ENCODE measurements at regions of chr3 and their contacts with region 1.

Region 1: GRCh38 chr3:128170805-128171516 is 17.7 kb downstream of the EEFSEC start:
- DNase-seq: peak; percentile 65 to 91 (median 80)
- H3K4me3 ChIP-seq: no peak overlapping the region
- H3K27ac ChIP-seq: no peak overlapping the region
- H3K4me1 ChIP-seq: peaks cover 0 to 14% of the 10 kb centered on the region in 2 donors
- H3K27me3 ChIP-seq: no peaks in the 10 kb centered on the region
- CTCF ChIP-seq: peak; percentile 53 to 98 (median 92)
- POLR2A ChIP-seq: no peak

Region 2: DNA sequence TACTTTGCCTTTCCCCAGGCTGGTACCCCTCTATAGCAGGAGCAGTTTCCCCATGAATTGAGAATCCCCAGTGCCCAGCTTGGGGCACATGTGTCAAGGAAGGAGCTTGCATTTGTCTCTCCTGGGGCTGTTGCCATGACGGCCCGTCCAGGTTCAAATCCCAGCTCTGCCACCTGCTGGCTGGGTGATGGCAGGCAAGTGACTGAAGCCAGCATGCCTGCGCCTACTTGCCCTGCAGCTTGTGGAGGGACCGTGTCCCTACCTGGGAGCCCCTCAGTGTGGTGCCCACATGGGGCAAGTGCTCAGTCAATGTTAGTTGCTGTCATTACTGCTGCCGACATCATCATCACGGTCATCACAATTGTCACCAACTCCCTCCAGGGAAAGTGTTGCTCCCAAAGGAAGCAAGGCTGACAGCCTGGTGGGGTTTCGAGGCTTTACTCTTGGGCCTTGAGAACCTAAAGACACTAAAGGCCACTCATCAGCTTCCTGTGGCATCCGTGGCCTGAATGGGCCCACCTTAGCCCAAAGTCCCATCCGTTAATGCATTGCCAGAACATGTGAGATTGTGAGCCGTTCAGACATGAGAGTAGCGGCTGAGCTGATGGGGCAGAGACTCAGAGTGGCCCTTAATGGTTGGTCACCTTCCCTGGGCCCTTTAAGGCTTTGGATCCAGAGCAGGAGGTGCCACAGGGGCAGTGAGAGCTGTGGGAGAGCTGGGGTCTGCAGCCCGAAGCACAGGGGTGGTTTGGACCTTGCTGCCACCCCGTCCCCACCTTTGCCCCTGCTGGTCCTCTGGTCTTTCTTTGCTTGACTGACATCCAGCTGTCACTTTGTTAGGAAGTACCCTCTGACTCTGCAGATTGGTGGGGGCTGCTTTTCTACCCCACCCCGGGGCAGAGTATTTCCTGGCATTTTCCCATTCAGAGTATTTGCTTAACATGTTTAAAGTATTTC is 151.4 kb after region 1 on chr3:
- intact Hi-C with region 1: loop called in 1 of 2 experiments (anchors 10 kb)
- DNase-seq: peak; percentile 33 to 76 (median 50)
- H3K4me3 ChIP-seq: no peak overlapping the region
- H3K27ac ChIP-seq: no peak overlapping the region
- H3K4me1 ChIP-seq: peaks cover 7 to 14% of the 10 kb centered on the region in 2 donors
- H3K27me3 ChIP-seq: no peaks in the 10 kb centered on the region
- CTCF ChIP-seq: peak in 5 of 6 experiments; percentile 34 to 63 (median 54)
- POLR2A ChIP-seq: no peak

Region 3: DNA sequence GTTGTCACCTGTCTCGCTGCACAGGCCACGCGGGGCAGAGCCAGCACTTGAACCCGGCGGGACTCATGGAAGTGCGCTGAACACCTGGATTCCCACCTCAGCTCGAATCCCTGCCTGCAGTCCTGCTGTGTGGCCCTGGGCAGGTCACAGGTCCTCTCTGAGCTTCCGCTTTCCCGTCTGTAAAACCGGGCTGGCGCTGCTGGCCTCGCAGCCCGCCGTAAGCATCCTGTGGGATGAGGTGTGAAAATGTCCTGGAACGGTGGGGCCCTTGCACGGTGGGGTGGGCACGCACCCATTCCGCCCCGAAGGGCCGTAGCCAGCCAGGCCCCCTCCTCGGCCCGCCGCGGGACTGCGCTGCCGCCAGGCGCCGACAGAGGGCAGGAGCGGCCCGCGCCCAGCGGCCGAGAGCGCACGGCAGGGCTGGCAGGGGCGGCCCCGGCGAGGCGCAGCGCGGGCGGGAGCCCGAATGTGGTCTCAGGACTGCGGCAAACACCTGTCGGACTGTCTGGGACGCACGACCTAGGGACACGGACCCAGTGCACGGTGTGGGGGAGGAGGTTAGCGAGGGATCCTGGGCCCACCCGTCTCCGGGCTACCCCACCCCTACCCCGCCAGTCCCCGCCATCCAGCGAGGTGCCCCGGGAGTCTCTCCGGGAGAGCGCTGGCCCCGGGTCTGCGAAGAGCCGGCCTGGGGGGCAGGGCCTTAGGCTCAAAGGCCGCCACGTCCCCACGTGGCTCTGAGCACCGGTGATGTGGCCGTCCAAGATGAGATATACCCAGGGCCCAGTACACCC is 255.4 kb after region 1 on chr3:
- intact Hi-C with region 1: loop called in 1 of 2 experiments (anchors 10 kb)
- DNase-seq: peak in 4 of 7 donors; percentile 25 to 56 (median 40)
- H3K4me3 ChIP-seq: peak overlapping the region in 1 of 4 donors; percentile 33
- H3K27ac ChIP-seq: no peak overlapping the region
- H3K4me1 ChIP-seq: peaks cover 0 to 9% of the 10 kb centered on the region in 2 donors
- H3K27me3 ChIP-seq: no peaks in the 10 kb centered on the region
- CTCF ChIP-seq: peak in 5 of 6 experiments; percentile 31 to 98 (median 95)
- POLR2A ChIP-seq: no peak

Region 4: GRCh38 chr3:128503164-128503651 is 332.2 kb after region 1 on chr3:
- intact Hi-C with region 1: loop called (anchors 5 kb)
- DNase-seq: no peak
- H3K4me3 ChIP-seq: no peak overlapping the region
- H3K27ac ChIP-seq: no peak overlapping the region
- H3K4me1 ChIP-seq: no peaks in the 10 kb centered on the region
- H3K27me3 ChIP-seq: peaks cover 7% of the 10 kb centered on the region
- CTCF ChIP-seq: peak in 3 of 6 experiments; percentile 3 to 16 (median 7)
- POLR2A ChIP-seq: no peak

Measured in adrenal gland (tissue), 19 donors.